Posterior vena cava (tissue), 2 donors: ENCODE measurements at regions of chr1 and their contacts with region 1.

Region 1: DNA sequence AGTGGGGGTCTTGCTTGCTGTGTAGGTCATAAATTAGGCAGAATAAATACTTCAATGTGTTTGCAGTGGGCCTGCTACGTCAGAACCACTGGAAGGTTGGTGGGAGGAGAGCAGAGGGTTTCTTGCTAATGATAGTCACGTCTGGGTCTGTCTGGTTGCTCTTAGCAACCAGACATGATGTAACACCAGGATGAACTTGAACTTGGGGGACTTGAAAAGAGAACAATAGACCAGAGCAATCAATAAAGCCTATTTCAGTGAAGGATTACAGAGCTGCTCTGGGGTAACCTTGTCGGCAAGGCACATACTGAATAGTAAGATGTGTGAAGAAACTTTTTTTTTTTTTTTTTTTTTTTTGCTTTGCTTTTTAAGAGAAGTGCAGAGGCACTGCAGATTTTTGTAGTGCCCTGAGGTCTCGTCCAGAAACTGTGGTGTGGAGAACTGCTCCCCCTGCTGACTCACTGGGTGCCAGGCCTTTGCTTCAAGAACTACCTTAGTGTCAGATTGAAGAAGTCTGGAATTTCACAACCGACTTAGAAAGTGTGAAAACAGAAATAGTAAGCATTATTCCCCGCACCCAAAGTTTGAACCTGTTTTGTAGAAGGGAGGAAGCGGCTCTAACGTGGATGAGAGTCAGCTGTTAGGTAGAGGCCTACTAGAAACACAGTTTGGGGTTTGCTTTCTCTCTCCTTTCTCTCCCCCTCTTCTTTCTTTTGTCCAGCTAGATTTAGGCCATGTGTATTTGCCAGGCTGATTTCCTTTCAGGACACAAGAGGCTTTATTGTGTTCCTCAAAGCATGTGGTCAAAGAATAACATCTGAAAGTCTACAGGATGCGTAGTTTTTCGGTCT is 271.6 kb downstream of the TM2D1 start:
- DNase-seq: peak; percentile 95

Region 2: DNA sequence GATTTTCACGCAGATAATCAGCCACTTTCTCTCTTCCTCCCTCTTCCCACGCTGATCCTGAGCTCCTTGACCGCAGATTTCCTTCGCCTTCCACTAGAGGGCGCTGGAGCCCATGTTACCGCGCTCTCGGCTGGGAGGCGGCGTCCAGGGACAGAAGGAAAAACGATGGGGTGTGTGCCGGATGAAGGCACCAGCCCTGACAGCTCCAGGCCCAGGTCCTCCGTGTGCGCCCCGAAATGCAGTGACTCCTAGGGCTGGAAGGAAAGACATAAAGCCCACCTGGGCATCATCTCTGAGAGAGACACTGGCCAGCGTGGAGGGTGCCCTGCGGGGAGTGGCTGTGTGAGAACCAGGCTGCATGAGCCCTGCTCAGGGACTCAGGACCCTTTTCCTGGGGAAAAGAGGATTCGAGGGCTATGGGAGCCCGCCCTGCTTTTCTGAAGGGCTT is 1481.8 kb before region 1 on chr1:
- intact Hi-C with region 1: loop called in 1 of 2 experiments (anchors 10 kb)
- DNase-seq: peak; percentile 90

Region 3: GRCh38 chr1:60274422-60275290 is 1178.7 kb before region 1 on chr1:
- intact Hi-C with region 1: loop called in 1 of 2 experiments (anchors 5 kb)
- DNase-seq: no peak

Region 4: DNA sequence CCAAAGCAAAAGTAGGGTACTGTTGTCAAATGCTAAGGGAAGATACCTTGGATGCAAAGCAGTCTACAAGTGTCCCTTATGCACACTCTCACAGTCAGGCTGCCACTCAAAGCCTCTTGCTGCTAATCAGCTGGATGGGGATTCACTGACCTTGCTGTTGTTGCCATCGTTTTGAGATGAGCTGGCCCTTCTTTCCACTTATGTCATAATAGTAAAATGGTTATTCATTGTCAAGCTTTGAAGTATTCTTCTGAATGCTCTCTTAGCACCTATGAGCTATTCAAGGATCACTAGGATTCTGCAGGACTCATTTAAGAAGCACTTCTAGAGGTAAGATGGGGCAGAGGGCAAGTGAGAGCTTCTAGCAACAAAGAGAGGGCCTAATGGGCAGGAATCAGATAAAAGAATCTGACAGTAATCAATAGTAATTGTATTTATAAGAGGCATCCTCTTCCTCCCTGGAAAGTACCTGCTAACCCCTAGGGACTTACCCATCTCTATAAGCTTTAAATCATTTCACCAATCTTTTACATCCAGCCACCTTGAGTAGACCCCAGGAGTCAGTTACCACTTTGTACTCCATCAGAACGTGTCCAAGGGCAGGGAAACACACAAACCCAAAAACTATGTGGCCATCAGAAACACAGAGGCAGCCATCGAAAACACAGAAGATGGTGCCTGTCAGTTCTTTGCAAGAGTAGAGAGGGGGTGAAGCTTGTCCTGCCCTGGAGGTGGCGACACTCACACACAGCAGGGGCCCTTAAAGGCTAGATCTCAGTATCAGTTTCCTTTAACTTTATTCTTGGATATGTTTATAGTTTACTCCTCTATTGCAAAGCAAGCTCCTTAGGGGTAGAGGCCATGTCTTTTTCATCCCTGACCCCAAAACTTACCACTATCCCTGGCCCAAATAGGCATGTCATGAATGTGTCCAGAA is 474.6 kb before region 1 on chr1:
- intact Hi-C with region 1: loop called in 1 of 2 experiments (anchors 10 kb)
- DNase-seq: no peak

Region 5: DNA sequence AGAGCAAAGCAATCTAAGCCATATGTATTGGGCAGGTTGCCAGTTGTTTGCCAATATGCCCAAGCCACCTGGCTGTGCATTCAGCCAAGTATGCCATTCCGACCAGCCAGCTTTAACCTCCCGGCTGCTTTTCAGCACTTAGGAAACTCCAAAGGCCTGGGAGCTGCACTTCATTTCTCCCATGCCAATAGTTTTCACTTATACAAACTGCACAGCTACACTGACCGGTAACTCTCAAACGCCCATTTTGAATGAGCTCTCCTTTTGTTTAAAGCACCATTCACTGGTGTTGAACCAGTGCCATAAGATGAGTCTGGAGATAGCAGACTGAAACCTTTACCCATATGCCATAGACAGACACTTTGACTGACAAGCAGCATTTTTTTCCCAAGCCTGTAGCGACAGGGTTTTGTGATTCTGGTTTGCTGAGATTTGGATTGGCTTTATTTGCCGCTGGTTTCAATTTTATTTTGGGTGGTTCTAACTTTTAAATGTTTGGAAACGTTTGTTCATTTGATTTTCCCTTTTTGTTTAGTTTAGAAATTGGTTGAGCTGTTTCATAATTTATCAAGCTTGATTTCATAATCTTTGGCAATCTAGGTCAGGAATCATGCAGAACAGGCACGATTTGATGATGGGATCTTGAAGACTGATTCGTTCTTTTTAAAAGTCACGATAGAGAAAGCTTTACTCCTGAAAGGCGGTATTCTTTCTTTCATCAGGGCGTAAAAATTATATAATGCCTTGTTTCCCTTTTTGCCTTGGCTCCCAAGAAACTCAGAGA is 226.4 kb before region 1 on chr1:
- intact Hi-C with region 1: no loop called
- DNase-seq: no peak

Region 6: DNA sequence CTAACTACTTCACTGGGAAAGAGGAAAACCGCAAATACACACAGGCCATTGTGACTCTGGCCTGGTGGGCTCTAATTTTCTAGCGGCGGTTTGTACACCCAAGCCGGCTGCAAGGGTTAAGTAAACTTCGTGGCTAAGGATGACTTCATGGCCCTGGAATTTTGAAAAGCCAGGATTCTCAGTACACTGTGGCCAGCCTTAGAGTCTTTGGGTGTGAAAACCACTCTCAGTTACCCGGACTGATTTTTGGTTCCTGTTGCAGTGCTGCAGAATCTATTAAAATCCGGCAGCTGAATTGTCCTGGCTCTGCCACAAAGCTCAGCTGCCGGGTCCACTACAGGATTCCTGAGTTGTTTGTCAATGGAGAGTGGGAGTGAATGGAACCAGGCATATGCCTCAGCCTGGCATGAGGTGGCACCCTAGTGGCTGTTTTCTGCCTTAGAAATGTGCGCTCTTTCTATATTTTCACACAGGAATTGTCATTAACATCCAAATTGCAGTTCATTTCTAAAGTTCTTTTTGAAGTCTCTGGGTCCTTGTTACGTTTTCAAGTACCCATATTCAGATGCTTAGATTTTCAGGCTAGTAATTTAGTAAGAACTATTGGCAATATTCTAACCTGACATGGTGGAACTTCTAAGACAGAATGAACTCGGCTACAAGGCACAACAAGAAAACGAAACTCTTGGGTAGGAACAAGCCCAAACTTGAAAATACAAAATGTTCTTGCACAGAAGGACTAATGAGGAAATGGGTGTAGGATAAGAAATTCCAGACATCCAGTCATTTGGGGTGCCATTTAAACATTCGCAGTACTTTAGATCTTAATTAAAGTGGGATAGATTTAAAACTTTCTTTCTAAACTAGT is 115.1 kb before region 1 on chr1:
- intact Hi-C with region 1: loop called in 1 of 2 experiments (anchors 5 kb)
- DNase-seq: no peak